Vagina (tissue), 2 donors: ENCODE measurements at regions of chr3 and their contacts with region 1.

Region 1: DNA sequence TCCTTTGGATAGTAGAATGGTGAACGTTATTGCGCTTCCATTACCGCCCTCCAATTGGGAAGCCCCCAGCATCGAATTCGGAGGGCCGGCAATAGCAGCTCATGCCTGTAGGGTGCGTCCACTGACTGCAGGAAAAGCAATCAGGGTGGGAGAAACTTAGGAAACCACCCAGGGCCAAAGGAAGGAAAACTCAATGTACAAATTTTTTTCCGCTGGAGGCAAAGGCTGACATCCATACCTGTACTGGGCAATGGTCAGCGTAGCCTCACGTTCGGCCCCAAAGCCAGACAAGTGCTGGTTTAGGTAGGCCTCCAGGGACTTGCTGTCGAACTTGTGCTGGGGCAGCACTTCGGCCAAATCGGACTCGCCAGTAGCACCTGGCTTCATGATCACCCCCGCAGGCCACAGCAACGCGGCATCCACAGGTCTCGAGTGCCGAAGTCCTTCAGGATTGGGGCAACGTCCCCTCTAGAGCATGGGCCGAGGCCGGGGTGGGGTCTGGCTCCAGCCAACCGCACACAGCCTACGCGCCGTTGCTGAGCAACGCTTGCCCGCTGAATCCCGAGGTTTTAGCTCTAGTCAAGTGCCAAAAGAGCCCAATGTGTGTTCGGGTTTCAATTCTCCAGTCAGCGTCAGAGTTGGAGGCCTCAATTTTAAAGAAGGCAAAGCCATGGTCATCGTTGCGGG is at the start of gene ACAD11:
- DNase-seq: peak in 1 of 2 donors; percentile 91
- H3K4me3 ChIP-seq: peak within 1 kb of the TSS; percentile 73 to 88
- H3K27ac ChIP-seq: peak within 1 kb of the TSS; percentile 80
- H3K4me1 ChIP-seq: peaks cover 34% of the 10 kb centered on the region
- H3K27me3 ChIP-seq: no peaks in the 10 kb centered on the region
- CTCF ChIP-seq: peak in 2 of 3 experiments; percentile 36 to 64
- POLR2A ChIP-seq: peak in 1 of 2 donors; percentile 43
- total RNA-seq, gene ACAD11: 26.5 TPM

Region 2: DNA sequence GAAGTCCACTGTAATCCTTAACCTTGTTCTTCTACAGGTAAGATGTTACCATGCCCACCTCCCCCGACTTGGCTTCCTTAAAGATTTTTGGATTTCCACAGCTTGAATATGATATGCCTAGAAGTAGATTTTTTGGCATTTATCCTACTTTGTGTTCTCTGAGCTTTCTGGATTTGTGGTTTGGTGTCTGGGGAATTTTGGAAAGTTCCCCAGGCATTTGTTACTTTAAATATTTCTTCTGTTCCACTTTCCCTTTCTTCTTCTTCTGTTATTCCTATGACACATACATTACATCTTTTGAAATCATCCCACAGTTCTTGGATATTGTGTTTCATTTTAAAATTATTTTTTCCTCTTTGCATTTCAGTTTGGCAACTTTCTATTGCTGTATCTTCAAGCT is 256.6 kb after region 1 on chr3:
- intact Hi-C with region 1: no loop called
- DNase-seq: no peak
- H3K4me3 ChIP-seq: no peak overlapping the region
- H3K27ac ChIP-seq: no peak overlapping the region
- H3K4me1 ChIP-seq: no peaks in the 10 kb centered on the region
- H3K27me3 ChIP-seq: no peaks in the 10 kb centered on the region
- CTCF ChIP-seq: no peak
- POLR2A ChIP-seq: no peak

Region 3: DNA sequence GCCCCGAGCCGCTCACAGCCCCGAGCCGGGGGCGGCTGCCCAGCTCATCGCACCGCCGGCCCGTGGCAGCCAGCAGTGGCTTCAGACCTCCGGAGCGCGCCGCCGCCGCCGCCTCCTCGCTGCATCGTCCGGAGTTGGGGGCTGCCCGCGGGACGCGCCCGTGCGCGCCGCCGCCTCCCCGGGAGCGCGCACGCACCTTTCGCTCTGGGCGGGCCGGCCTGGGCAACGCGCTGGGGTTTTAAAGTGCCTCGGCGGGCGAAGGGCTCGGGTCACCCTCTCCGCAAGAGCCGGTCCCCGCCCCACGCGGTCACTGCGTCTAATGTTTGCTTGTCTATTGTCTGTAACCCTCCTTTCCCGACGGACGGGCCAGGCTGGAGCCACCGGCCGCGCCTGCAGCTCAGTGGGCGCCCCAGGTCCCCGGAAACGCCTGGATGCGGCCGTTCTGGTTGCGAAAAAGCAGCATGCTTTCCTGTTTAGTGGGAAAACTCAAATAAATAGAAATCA is 1591.3 kb after region 1 on chr3 and contains the start of gene RYK:
- intact Hi-C with region 1: loop called (anchors 5 kb)
- DNase-seq: no peak
- H3K4me3 ChIP-seq: peak within 1 kb of the TSS; percentile 79 to 83
- H3K27ac ChIP-seq: peak within 1 kb of the TSS; percentile 98
- H3K4me1 ChIP-seq: peaks cover 50% of the 10 kb centered on the region
- H3K27me3 ChIP-seq: no peaks in the 10 kb centered on the region
- CTCF ChIP-seq: no peak
- POLR2A ChIP-seq: peak in 1 of 2 donors; percentile 75
- total RNA-seq, gene RYK: 102 TPM